OCI-LY7 (cell line): ENCODE measurements at regions of chr13 and their contacts with region 1.

Region 1: DNA sequence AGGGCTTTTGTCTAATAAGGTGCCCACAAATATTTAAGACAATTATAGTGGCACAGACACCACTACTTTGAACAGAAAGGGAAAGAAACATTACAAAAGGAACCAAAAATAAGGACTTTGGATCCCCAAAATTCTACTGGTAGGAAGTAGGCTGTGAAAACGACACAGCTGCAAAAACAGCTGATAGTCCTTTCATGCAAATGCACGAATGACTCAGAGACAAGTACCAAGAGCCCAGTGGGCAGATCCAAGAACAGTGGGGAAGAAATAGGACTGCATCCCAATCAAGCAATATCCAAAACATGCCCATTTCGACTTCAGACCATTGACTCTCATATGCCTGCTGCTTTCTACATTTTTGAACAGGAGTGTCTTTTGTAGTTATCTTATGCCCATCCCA is 269.4 kb upstream of the NBEA start:
- DNase-seq: no peak
- H3K4me3 ChIP-seq: no peak overlapping the region
- H3K27ac ChIP-seq: no peak overlapping the region
- H3K4me1 ChIP-seq: no peaks in the 10 kb centered on the region
- CTCF ChIP-seq: no peak

Region 2: GRCh38 chr13:34435338-34435737 is 237.3 kb before region 1 on chr13:
- CTCF ChIA-PET with region 1: no interaction called
- POLR2A ChIA-PET with region 1: no interaction called
- intact Hi-C with region 1: no loop called
- DNase-seq: no peak
- H3K4me3 ChIP-seq: no peak overlapping the region
- H3K27ac ChIP-seq: no peak overlapping the region
- H3K4me1 ChIP-seq: no peaks in the 10 kb centered on the region
- CTCF ChIP-seq: no peak

Region 3: GRCh38 chr13:34608331-34608730 is 64.3 kb before region 1 on chr13:
- CTCF ChIA-PET with region 1: no interaction called
- POLR2A ChIA-PET with region 1: no interaction called
- intact Hi-C with region 1: loop called (anchors 2 kb)
- DNase-seq: no peak
- H3K4me3 ChIP-seq: no peak overlapping the region
- H3K27ac ChIP-seq: no peak overlapping the region
- H3K4me1 ChIP-seq: no peaks in the 10 kb centered on the region
- CTCF ChIP-seq: no peak